OCI-LY7 (cell line): ENCODE measurements at regions of chr18 and their contacts with region 1.

Region 1: DNA sequence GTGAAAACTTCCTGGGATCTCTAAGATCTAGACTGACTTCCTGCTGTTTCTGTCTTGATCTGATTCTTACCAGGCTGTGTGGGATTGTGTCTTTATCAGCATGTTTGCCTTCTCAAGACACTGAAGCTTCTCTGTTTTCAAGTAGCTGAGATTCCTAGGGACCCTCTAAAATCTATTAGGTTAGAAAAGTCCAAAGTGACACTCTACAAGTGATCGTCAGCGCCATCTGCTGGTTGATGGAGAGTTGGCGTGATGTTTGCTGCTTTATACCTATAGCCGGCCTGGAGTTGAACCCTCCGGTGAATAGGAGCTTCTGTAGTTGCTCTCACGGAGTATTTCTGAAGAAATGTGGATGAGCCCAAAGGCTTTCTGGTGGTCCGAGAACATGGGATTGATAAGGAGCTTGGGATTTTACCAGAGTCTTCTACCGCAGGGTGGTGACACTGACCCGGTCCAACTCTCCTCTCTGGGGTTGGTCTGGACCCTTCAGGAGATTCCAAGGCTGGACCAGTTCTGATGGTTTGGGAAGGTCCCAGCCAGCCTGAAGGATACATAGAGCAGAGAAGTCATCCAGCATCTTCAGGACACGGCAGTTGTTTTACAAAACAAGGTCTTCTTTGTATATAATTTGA is 96.0 kb upstream of the TTC39C start:
- DNase-seq: peak; percentile 89
- H3K4me3 ChIP-seq: no peak overlapping the region
- H3K27ac ChIP-seq: no peak overlapping the region
- H3K4me1 ChIP-seq: peaks cover 3% of the 10 kb centered on the region
- CTCF ChIP-seq: peak; percentile 99

Region 2: GRCh38 chr18:23515911-23516546 is 402.5 kb before region 1 on chr18:
- CTCF ChIA-PET with region 1: no interaction called
- POLR2A ChIA-PET with region 1: no interaction called
- intact Hi-C with region 1: loop called (anchors 10 kb)
- DNase-seq: peak; percentile 81
- H3K4me3 ChIP-seq: no peak overlapping the region
- H3K27ac ChIP-seq: no peak overlapping the region
- H3K4me1 ChIP-seq: no peaks in the 10 kb centered on the region
- CTCF ChIP-seq: peak; percentile 97

Region 3: DNA sequence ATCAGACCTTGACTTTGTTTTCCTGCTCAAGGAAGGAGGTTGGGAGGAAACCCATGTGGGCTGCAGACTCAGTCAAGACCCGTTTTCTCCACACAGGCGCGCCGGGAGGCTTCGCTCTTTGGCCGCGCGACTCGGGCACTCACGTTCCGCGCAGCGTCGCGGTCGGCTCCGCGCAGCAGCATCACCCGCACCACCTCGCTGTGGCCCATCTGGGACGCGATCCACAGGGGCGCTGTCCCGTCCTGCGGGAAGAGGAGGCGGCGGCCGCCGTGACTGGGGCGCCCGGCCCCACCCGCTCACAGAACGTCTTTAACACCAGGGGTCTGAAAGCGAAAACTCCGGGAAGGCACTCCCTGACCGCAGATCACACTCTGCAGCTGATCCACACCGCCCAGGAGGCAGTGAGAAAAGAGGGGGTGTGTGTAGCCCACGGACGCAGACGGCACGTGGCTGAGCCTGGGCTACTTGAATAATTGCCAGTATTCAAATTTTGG is 299.1 kb before region 1 on chr18:
- CTCF ChIA-PET with region 1: interaction called, 3 read pairs
- POLR2A ChIA-PET with region 1: no interaction called
- intact Hi-C with region 1: loop called (anchors 1 kb)
- DNase-seq: no peak
- H3K4me3 ChIP-seq: no peak overlapping the region
- H3K27ac ChIP-seq: no peak overlapping the region
- H3K4me1 ChIP-seq: no peaks in the 10 kb centered on the region
- CTCF ChIP-seq: no peak

Region 4: DNA sequence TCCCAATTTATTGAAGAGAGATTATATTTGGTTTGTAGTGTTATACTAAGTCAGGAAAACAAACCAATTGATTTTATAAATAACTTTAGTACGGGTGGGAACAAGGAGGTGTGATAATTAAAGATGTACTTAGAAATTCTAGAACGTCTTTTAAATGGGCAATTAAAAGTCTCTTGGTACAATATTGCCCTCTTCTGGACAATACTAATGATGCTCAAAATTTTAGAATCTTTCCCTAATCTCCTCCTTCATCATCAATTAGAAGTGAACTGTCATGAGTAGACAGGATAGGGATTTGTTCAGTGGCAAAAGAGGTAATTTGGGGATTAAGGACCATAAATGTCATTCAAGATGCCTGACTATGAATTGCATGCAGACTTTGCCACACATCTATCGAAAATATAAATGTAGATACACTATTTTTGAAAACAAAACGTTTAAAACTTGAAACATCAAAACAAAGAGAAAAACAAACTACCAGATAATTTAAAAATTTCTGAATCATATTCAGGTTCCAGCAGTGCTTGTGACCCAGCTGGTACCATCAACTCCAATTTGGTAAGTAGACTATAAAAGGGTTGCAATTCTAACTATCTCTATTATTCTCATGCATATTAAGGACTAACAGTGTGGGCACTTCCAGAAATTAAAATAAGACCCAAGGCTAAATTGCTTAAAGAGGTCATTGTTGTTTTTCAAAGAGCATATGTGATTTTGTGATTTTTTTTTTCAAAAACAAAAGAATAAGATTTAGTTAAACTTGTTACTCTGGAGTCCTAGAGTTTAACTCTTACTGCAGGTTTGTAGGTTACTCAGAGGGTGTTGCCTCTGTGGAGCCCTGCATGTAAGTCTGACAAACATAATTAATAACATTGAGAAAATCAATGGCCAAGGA is 105.7 kb before region 1 on chr18:
- CTCF ChIA-PET with region 1: no interaction called
- POLR2A ChIA-PET with region 1: no interaction called
- intact Hi-C with region 1: loop called (anchors 2 kb)
- DNase-seq: peak; percentile 46
- H3K4me3 ChIP-seq: no peak overlapping the region
- H3K27ac ChIP-seq: no peak overlapping the region
- H3K4me1 ChIP-seq: peaks cover 14% of the 10 kb centered on the region
- CTCF ChIP-seq: peak; percentile 85

Region 5: GRCh38 chr18:23828426-23828825 is 90.1 kb before region 1 on chr18:
- CTCF ChIA-PET with region 1: interaction called, 3 read pairs
- POLR2A ChIA-PET with region 1: no interaction called
- intact Hi-C with region 1: loop called (anchors 5 kb)
- DNase-seq: peak; percentile 53
- H3K4me3 ChIP-seq: no peak overlapping the region
- H3K27ac ChIP-seq: no peak overlapping the region
- H3K4me1 ChIP-seq: peaks cover 14% of the 10 kb centered on the region
- CTCF ChIP-seq: no peak

Region 6: GRCh38 chr18:24118750-24119577 is 200.4 kb after region 1 on chr18:
- CTCF ChIA-PET with region 1: no interaction called
- POLR2A ChIA-PET with region 1: no interaction called
- intact Hi-C with region 1: loop called (anchors 1 kb)
- DNase-seq: peak; percentile 82
- H3K4me3 ChIP-seq: no peak overlapping the region
- H3K27ac ChIP-seq: no peak overlapping the region
- H3K4me1 ChIP-seq: no peaks in the 10 kb centered on the region
- CTCF ChIP-seq: peak; percentile 96